GM13977 (cell line): ENCODE measurements at regions of chr2 and their contacts with region 1.

Region 1: GRCh38 chr2:46776687-46777327 is 138.8 kb downstream of the MCFD2 start:
- DNase-seq: peak; percentile 71
- CTCF ChIP-seq: peak; percentile 68

Region 2: GRCh38 chr2:46650556-46651001 is 126.2 kb before region 1 on chr2:
- in situ Hi-C with region 1: loop called (anchors 10 kb)
- DNase-seq: peak; percentile 51
- CTCF ChIP-seq: peak; percentile 85